K562 (cell line): ENCODE measurements at regions of chrX and their contacts with region 1.

Region 1: DNA sequence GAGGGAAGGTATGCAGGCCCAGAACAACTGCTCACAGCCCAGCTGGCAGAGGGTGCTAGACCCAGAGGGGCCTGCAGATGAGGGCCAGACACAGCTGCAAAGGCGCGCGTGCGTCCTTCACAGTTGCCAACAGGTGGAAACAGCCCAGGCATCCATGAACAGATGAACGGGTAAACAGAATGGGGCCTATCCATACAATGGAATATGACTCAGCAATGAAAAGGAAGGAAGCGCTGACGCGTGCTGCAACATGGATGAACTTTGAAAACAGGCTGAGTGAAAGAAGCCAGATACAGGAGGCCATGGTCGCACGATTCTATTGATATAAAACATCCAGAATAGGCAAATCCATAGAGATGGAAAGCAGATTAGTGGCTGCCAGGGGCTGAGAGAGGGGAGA is 83.1 kb upstream of the DDX3X start:
- DNase-seq: no peak
- ATAC-seq: no peak
- H3K4me3 ChIP-seq: no peak overlapping the region
- H3K27ac ChIP-seq: no peak overlapping the region
- H3K4me1 ChIP-seq: peaks cover 0 to 10% of the 10 kb centered on the region in 2 experiments; a peak in 2 of 5 replicates
- H3K27me3 ChIP-seq: no peaks in the 10 kb centered on the region
- CTCF ChIP-seq: no peak
- EP300 ChIP-seq: no peak
- POLR2A ChIP-seq: no peak
- RAD21 ChIP-seq: no peak

Region 2: GRCh38 chrX:40877887-40878286 is 373.0 kb before region 1 on chrX:
- CTCF ChIA-PET with region 1: no interaction called
- POLR2A ChIA-PET with region 1: no interaction called
- in situ Hi-C with region 1: no loop called
- intact Hi-C with region 1: loop called (anchors 5 kb)
- DNase-seq: peak in 3 of 4 experiments; percentile 13 to 16 (median 16)
- ATAC-seq: no peak
- H3K4me3 ChIP-seq: no peak overlapping the region
- H3K27ac ChIP-seq: no peak overlapping the region
- H3K4me1 ChIP-seq: no peaks in the 10 kb centered on the region
- H3K27me3 ChIP-seq: no peaks in the 10 kb centered on the region
- CTCF ChIP-seq: peak in 2 of 3 experiments; percentile 28 to 50; a peak in 3 of 6 replicates
- EP300 ChIP-seq: no peak
- POLR2A ChIP-seq: no peak
- RAD21 ChIP-seq: peak; percentile 41 to 58

Region 3: GRCh38 chrX:41180194-41180908 is 70.5 kb before region 1 on chrX:
- CTCF ChIA-PET with region 1: interaction called, 5 read pairs
- POLR2A ChIA-PET with region 1: no interaction called
- in situ Hi-C with region 1: no loop called
- intact Hi-C with region 1: loop called (anchors 5 kb)
- DNase-seq: peak; percentile 18 to 58 (median 40)
- ATAC-seq: peak; percentile 88
- H3K4me3 ChIP-seq: no peak overlapping the region
- H3K27ac ChIP-seq: no peak overlapping the region
- H3K4me1 ChIP-seq: no peaks in the 10 kb centered on the region
- H3K27me3 ChIP-seq: no peaks in the 10 kb centered on the region
- CTCF ChIP-seq: peak; percentile 55 to 62 (median 58)
- EP300 ChIP-seq: no peak
- POLR2A ChIP-seq: no peak
- RAD21 ChIP-seq: peak; percentile 23 to 43; a peak in 1 of 4 replicates